Tibial artery (tissue), 4 donors: ENCODE measurements at regions of chr10 and their contacts with region 1.

Region 1: GRCh38 chr10:122298598-122299301 is 27.7 kb downstream of the BTBD16 start:
- DNase-seq: peak; percentile 71 to 83
- H3K4me3 ChIP-seq: peak overlapping the region in 1 of 2 donors; percentile 13
- H3K27ac ChIP-seq: no peak overlapping the region
- H3K4me1 ChIP-seq: peaks cover 0 to 4% (median 0%) of the 10 kb centered on the region in 4 donors
- H3K27me3 ChIP-seq: peaks cover 0 to 6% of the 10 kb centered on the region in 2 donors
- CTCF ChIP-seq: peak; percentile 92 to 95

Region 2: DNA sequence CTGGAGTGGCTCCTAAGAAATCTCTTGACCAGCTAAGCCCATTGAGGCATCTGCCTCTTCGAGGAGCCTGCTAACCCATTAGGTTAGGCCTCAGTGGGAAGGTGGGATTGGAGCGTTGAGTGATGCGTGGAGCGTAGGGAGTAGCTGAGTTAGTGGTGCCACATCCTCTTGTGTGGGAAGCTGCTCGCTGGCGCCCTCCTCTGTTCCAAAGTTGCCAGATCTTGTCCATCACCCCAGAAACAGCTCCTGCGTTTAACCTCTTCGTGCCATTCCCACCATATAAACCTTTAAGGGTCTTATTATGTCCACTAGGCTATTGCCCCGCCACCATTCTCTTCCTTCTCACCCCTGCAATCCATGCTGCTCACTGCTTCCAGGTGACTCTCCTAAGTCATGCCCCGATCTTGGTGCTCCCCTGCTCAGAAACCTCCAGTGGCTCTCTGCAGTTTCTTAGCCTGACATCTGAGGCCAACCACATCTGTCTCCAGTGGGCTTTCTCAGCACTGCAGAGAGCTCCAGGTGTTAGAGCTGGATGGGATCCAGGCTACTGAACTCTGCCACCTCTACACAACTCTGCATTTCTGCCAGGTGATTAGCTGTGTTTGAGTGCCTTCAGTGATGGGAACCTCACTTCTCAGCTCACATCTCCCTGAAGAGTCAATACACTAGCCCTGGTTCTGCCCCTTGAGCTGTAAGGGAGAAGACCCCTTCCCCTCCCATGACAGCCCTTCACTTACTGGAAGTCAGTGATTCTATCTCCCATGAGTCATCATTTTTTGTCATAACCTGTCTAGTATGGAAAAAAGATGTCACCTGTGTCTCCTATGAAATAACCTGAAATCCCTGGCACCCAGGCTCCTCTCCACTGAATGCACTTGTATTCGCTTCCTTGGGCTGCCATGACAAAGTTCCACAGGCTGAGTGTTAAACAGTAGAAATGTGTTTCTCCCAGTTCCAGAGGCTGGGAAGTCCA is 635.5 kb before region 1 on chr10:
- intact Hi-C with region 1: no loop called
- DNase-seq: no peak
- H3K4me3 ChIP-seq: no peak overlapping the region
- H3K27ac ChIP-seq: no peak overlapping the region
- H3K4me1 ChIP-seq: peaks cover 0 to 21% (median 16%) of the 10 kb centered on the region in 4 donors
- H3K27me3 ChIP-seq: no peaks in the 10 kb centered on the region
- CTCF ChIP-seq: no peak

Region 3: DNA sequence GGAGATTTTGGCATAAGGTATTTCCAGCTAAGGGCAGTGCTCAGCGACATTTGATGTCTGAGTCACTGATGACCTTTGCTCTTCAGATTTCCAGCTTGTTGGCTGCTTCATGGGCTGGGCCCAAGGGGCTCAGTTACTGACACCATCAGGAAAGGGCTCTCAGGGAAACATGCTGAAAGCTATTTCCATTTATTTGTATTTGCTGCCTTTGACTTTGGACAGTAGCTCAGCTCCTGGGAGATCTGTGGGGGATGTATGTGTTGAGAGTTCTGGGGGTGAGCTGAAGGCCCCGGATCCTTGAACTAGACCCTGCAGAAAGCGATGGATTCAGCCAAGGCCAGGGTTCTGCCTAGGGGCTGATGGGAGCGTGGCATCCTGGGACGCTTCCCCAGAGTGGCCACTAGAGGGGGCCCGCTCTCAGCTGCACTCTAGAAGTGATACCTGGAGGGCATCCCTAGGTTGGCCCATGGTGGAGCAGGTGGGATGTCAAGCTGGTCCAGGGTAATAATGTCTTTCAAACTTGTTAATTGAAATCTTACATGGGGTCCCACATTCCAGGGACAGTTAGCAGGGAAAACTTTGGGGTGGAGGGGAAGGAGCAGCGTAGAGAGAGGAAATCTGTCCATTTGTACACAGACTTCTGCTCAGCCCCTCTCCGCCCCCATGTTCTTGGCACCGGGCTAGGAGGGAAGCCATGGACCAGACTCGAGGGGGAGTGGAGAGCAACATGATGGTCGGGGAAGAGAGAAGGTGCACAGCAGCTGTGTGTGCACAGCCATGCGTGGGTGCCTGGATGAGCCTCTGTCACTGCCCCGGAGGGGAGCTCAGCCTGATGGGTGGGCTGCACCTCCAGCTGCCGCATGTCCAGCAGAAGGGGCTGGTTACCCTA is 30.7 kb before region 1 on chr10:
- intact Hi-C with region 1: no loop called
- DNase-seq: peak in 1 of 2 donors; percentile 43
- H3K4me3 ChIP-seq: no peak overlapping the region
- H3K27ac ChIP-seq: no peak overlapping the region
- H3K4me1 ChIP-seq: peaks cover 0 to 4% (median 0%) of the 10 kb centered on the region in 4 donors
- H3K27me3 ChIP-seq: no peaks in the 10 kb centered on the region
- CTCF ChIP-seq: peak; percentile 66 to 90

Region 4: DNA sequence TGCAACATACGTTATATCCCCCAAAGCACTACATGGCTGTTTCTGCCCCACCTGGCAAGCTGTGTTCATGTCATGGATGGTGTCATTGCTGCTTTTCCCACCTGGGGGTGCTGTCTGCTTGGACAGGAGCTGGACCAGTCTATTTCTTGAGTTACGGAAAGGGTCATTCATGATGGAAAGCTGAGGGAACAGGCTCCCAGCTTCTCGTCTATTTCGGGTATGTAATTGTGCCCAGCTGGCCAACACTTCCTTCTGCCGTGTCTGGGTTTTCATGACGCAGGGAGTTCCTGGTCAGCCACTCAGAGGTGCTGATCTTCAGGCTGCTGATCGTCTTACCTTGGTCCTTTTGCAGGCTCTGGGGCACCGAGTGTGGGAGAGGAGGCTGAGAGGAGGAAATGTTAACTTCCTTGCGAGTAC is 19.0 kb before region 1 on chr10:
- intact Hi-C with region 1: no loop called
- DNase-seq: no peak
- H3K4me3 ChIP-seq: no peak overlapping the region
- H3K27ac ChIP-seq: no peak overlapping the region
- H3K4me1 ChIP-seq: peaks cover 0 to 16% (median 3%) of the 10 kb centered on the region in 4 donors
- H3K27me3 ChIP-seq: no peaks in the 10 kb centered on the region
- CTCF ChIP-seq: peak in 1 of 2 experiments; percentile 25

Region 5: GRCh38 chr10:122435212-122435827 is 136.6 kb after region 1 on chr10:
- intact Hi-C with region 1: loop called (anchors 2 kb)
- DNase-seq: no peak
- H3K4me3 ChIP-seq: no peak overlapping the region
- H3K27ac ChIP-seq: no peak overlapping the region
- H3K4me1 ChIP-seq: no peaks in the 10 kb centered on the region
- H3K27me3 ChIP-seq: no peaks in the 10 kb centered on the region
- CTCF ChIP-seq: peak; percentile 55 to 80

Region 6: GRCh38 chr10:122565728-122566206 is 267.0 kb after region 1 on chr10:
- intact Hi-C with region 1: loop called (anchors 5 kb)
- DNase-seq: peak; percentile 83 to 84
- H3K4me3 ChIP-seq: peak overlapping the region; percentile 11 to 33
- H3K27ac ChIP-seq: no peak overlapping the region
- H3K4me1 ChIP-seq: peaks cover 0 to 8% (median 5%) of the 10 kb centered on the region in 4 donors
- H3K27me3 ChIP-seq: peaks cover 0 to 4% of the 10 kb centered on the region in 2 donors
- CTCF ChIP-seq: peak; percentile 86

Region 7: GRCh38 chr10:122715576-122715975 is 416.8 kb after region 1 on chr10:
- intact Hi-C with region 1: no loop called
- DNase-seq: no peak
- H3K4me3 ChIP-seq: no peak overlapping the region
- H3K27ac ChIP-seq: no peak overlapping the region
- H3K4me1 ChIP-seq: no peaks in the 10 kb centered on the region
- H3K27me3 ChIP-seq: peaks cover 0 to 47% of the 10 kb centered on the region in 2 donors
- CTCF ChIP-seq: no peak